Panc1 (cell line): ENCODE measurements at regions of chr4 and their contacts with region 1.

Region 1: GRCh38 chr4:186688150-186688943 is 35.3 kb downstream of the FAT1 start:
- DNase-seq: no peak
- ATAC-seq: no peak
- H3K4me3 ChIP-seq: peak overlapping the region; percentile 4 to 43; a peak in 3 of 4 replicates
- H3K27ac ChIP-seq: peak overlapping the region; percentile 98
- H3K4me1 ChIP-seq: peaks cover 77% of the 10 kb centered on the region
- H3K27me3 ChIP-seq: no peaks in the 10 kb centered on the region
- CTCF ChIP-seq: no peak

Region 2: DNA sequence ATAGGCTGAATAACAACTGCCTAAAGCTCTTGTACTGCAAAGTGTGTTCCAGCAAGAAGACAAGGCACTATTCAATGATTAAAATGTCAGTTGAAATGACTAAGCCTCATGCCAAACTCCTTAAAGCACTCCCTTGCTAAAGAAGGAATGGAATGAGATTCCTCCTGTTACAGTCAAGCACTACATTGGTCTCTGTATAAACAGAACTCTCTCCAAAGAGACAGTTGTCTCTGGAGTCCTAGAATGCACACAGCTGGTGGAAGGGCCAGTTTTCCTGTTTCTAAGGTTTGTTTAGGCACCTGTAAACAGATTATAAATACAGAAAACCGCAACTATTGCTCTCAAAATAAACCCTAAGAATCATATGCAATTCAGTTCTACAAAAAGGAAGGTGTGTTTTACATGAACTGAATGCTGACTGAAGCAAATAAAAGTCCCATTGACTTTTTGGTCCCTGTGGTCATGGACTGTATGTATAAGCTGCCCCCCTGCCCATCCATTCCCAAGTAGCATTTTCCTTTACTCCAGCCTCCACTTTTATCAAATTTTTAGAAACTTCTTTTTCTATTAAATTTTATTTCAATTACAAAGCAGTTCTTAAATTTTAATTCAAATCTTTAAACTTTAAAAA is 11.7 kb before region 1 on chr4:
- CTCF ChIA-PET with region 1: no interaction called
- POLR2A ChIA-PET with region 1: no interaction called
- in situ Hi-C with region 1: no loop called
- intact Hi-C with region 1: no loop called
- DNase-seq: no peak
- ATAC-seq: peak; percentile 91
- H3K4me3 ChIP-seq: peak overlapping the region in 1 of 2 experiments; percentile 16; a peak in 1 of 4 replicates
- H3K27ac ChIP-seq: peak overlapping the region; percentile 92
- H3K4me1 ChIP-seq: peaks cover 80% of the 10 kb centered on the region
- H3K27me3 ChIP-seq: no peaks in the 10 kb centered on the region
- CTCF ChIP-seq: no peak

Region 3: DNA sequence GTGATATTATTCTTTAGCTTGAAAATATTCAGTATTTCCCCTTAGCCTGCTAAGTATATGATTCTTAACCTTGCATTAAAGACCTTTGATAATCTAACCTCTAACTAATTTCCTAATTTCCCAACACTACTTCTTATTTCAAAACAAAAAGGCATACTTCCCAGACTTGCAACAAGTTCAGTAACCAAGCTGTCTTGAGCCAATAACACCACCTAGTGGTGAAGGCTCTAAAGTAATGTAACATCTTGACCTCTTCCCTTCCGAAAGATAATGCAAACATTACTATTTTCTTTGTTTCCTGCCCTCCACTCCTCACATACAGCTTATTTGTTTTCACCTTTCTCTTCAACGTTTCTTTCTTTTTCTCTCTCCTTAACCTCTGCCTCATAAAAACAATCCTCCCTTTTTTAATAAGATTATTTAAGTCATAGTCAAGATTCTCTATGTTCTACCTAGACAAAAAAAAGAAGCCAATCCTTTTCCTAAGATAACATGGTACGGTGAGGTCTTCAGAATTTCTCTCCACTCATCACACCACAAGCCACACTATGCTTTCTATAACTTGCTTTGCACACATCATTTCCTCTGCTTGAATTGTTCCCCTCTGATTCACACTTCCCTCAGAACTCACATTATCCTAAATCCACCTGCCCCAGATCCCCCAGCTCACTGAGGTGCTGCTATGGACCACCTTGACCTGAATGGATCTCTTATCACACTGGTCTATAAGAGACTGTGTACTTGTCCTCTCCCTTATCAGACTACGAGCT is 31.8 kb after region 1 on chr4:
- CTCF ChIA-PET with region 1: interaction called, 3 read pairs
- POLR2A ChIA-PET with region 1: no interaction called
- in situ Hi-C with region 1: no loop called
- intact Hi-C with region 1: loop called (anchors 1 kb)
- DNase-seq: no peak
- ATAC-seq: no peak
- H3K4me3 ChIP-seq: no peak overlapping the region
- H3K27ac ChIP-seq: peak overlapping the region; percentile 95
- H3K4me1 ChIP-seq: peaks cover 45% of the 10 kb centered on the region
- H3K27me3 ChIP-seq: no peaks in the 10 kb centered on the region
- CTCF ChIP-seq: peak; percentile 29; the same call in 1 of the 2 replicates